ENCODE measurements at regions of chr17 and their contacts with region 1.

Region 1: GRCh38 chr17:50626037-50626574 is 8.6 kb upstream of the ABCC3 start:
- DNase-seq: peak; percentile 92 to 94
- H3K4me3 ChIP-seq: no peak overlapping the region
- H3K4me3 Mint-ChIP-seq: no peak overlapping the region
- H3K27ac Mint-ChIP-seq: peak overlapping the region; percentile 0
- H3K4me1 ChIP-seq: peaks cover 37% of the 10 kb centered on the region
- H3K4me1 Mint-ChIP-seq: peaks cover 29% of the 10 kb centered on the region
- H3K27me3 ChIP-seq: no peaks in the 10 kb centered on the region
- H3K27me3 Mint-ChIP-seq: no peaks in the 10 kb centered on the region
- CTCF ChIP-seq: peak; percentile 99

Region 2: GRCh38 chr17:50523208-50523607 is 102.9 kb before region 1 on chr17:
- CTCF ChIA-PET with region 1: interaction called, 10 read pairs
- POLR2A ChIA-PET with region 1: no interaction called
- intact Hi-C with region 1: no loop called
- DNase-seq: peak; percentile 88 to 94
- H3K4me3 ChIP-seq: no peak overlapping the region
- H3K4me3 Mint-ChIP-seq: no peak overlapping the region
- H3K27ac Mint-ChIP-seq: peak overlapping the region; percentile 17
- H3K4me1 ChIP-seq: peaks cover 23% of the 10 kb centered on the region
- H3K4me1 Mint-ChIP-seq: peaks cover 26% of the 10 kb centered on the region
- H3K27me3 ChIP-seq: no peaks in the 10 kb centered on the region
- H3K27me3 Mint-ChIP-seq: no peaks in the 10 kb centered on the region
- CTCF ChIP-seq: peak in 1 of 2 experiments; percentile 60

Region 3: DNA sequence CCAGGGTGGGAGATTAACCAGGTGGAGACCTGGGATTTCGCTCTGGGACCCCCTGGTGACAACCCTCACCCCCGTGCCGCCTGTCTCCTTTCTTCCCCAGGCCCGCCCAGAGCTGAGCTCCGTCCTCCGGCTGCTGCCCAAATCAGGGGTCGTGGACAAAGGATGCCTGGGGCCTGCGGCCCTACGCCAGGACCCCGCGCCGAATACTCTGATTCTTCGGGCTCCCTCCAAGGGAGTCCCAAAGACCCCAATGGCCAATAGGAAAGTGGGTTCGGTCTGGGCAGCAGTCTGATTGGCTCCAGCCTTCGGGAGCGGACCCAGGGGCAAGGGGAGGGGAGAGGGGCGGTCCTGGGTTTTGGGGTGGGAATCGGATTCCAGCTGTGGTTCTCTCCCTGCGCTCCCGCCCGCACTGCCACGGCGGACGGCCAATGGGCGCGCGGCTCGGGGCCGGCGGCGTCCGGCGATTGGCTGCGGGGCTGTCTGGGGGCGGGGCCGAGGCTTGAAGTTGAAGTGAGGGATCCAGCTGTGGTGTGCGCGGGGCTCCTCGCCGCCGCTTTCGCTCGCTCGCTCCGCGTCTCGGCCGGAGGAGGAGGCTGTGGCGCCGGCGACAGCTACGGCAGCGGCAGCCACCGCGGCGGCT is 65.8 kb before region 1 on chr17 and contains the start of gene CACNA1G:
- CTCF ChIA-PET with region 1: interaction called, 103 read pairs
- POLR2A ChIA-PET with region 1: interaction called, 8 read pairs
- intact Hi-C with region 1: loop called (anchors 2 kb)
- DNase-seq: peak; percentile 97 to 100
- H3K4me3 ChIP-seq: peak within 1 kb of the TSS; percentile 41
- H3K4me3 Mint-ChIP-seq: peak within 1 kb of the TSS; percentile 87
- H3K27ac Mint-ChIP-seq: peak within 1 kb of the TSS; percentile 52
- H3K4me1 ChIP-seq: peaks cover 16% of the 10 kb centered on the region
- H3K4me1 Mint-ChIP-seq: peaks cover 7% of the 10 kb centered on the region
- H3K27me3 ChIP-seq: peaks cover 12% of the 10 kb centered on the region
- H3K27me3 Mint-ChIP-seq: peaks cover 16% of the 10 kb centered on the region
- CTCF ChIP-seq: no peak
- total RNA-seq, gene CACNA1G: 1.4 and 1.6 TPM in 2 replicates

Region 4: DNA sequence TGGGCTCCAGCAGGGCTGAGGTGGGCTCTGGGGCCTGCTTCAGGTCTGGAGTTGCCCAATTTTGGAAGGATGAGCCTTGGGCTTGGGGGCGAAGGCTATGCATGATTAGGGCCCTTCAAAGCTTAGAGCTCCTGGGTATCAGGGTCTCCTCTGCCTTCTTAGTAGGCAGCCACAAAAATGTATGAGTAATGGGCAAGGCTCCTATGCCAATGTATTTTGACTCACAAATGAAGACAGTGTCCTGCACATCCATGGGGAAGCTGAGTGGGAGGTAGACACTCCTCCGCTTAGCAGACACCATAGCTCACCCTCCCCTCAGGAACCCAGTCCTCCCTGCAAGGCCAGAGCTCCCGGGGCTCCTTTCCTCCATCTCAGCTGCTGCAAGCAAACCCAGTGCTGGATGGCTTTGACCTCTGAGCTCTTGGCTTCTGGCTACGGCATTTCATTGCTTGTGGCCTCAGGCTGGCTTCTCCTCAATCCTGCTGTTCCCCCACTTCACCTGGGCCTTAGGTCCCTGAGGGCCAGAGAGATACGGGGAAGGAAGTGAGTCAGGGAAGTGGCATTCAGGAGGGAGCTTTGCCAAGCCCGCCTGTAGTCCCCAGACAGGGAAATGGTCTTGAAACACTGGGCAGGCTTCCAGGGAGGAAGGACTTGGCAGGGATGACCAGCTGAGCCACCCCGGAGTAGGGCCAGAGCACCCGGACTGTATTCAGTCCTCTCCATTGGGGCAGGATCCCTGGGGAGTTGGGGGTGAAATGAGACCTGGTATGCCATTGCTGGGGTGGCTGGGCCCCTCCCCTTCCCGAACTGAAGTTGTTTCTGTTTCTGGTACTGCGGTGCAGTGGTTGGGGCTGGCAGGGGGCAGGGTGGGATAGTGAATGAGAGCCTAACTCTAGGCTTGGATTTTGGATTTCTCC is 13.0 kb after region 1 on chr17:
- CTCF ChIA-PET with region 1: interaction called, 54 read pairs
- POLR2A ChIA-PET with region 1: interaction called, 4 read pairs
- intact Hi-C with region 1: no loop called
- DNase-seq: peak; percentile 13 to 83
- H3K4me3 ChIP-seq: no peak overlapping the region
- H3K4me3 Mint-ChIP-seq: no peak overlapping the region
- H3K27ac Mint-ChIP-seq: peak overlapping the region; percentile 1
- H3K4me1 ChIP-seq: peaks cover 69% of the 10 kb centered on the region
- H3K4me1 Mint-ChIP-seq: peaks cover 31% of the 10 kb centered on the region
- H3K27me3 ChIP-seq: no peaks in the 10 kb centered on the region
- H3K27me3 Mint-ChIP-seq: no peaks in the 10 kb centered on the region
- CTCF ChIP-seq: no peak

Region 5: DNA sequence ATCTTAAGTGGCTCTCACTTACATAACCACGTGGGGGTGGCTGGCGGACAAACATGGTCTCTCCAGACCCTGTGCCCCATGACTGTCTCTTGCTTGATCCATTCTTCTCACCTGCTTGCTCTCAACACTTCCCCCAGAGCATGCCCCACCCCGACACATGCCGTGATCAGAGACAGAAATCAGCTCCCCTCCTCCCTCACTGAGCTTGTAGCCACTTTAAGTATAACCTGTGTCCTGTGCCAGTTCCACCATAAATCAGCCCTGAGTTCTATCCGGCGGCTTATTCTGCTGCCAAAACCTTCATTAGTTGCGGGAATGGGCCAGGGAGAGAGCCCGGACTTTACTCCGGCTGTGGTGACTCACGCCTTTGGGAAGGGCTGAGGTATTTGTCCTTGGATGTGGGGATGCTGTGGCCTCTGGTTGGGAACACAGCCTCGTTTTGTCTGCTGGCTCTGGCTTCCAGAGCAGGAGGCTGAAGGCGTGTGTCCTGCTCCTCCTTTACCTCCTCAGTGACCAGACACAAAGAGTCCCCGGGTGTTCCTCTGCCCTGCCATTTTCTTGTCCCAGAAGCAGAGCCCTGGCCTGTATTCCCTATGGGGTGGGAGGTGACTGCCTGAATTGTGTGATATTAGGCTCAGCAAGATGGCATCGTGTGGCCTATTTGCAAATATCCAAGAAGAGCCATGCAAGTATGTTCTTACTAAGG is 60.5 kb after region 1 on chr17:
- CTCF ChIA-PET with region 1: interaction called, 132 read pairs
- POLR2A ChIA-PET with region 1: interaction called, 20 read pairs
- intact Hi-C with region 1: loop called (anchors 1 kb)
- DNase-seq: peak; percentile 94 to 98
- H3K4me3 ChIP-seq: peak overlapping the region; percentile 38
- H3K4me3 Mint-ChIP-seq: peak overlapping the region; percentile 77
- H3K27ac Mint-ChIP-seq: peak overlapping the region; percentile 96
- H3K4me1 ChIP-seq: peaks cover 91% of the 10 kb centered on the region
- H3K4me1 Mint-ChIP-seq: peaks cover 70% of the 10 kb centered on the region
- H3K27me3 ChIP-seq: no peaks in the 10 kb centered on the region
- H3K27me3 Mint-ChIP-seq: no peaks in the 10 kb centered on the region
- CTCF ChIP-seq: no peak